ENCODE measurements at regions of chr2 and their contacts with region 1.

Region 1: GRCh38 chr2:75676464-75676863 is 29.9 kb downstream of the MRPL19 start:
- DNase-seq: no peak
- H3K4me3 ChIP-seq: no peak overlapping the region
- H3K27ac ChIP-seq: no peak overlapping the region
- H3K4me1 ChIP-seq: peaks cover 21% of the 10 kb centered on the region
- H3K27me3 ChIP-seq: no peaks in the 10 kb centered on the region
- CTCF ChIP-seq: no peak

Region 2: GRCh38 chr2:75640621-75641121 is 35.8 kb before region 1 on chr2:
- intact Hi-C with region 1: loop called (anchors 5 kb)
- DNase-seq: peak; percentile 57
- H3K4me3 ChIP-seq: no peak overlapping the region
- H3K27ac ChIP-seq: peak overlapping the region; percentile 41
- H3K4me1 ChIP-seq: peaks cover 16% of the 10 kb centered on the region
- H3K27me3 ChIP-seq: no peaks in the 10 kb centered on the region
- CTCF ChIP-seq: peak; percentile 100

Measured in left ventricle myocardium inferior (tissue), 1 donor.